Thyroid gland (tissue), 4 donors: ENCODE measurements at regions of chr7 and their contacts with region 1.

Region 1: DNA sequence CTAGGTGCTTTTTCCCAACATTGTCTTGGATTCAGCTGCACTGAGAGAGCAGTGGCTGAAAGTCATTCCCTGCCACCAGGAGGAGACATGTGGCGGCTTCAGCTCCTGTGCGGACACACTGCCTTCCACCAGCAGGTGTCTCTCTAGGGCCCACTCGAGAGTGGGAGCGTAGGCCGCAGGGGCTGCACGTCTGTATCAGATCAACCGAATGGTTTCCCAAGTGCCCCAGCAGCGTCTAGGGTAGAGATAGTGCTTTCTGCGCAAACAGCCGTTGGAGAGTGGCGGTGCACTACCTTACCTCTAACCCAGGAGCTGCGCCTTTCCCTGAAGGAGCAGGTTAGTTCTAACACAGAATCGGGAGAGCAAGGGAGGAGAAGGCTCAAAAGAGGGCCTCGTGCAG is 31.7 kb downstream of the PAPOLB start:
- DNase-seq: peak; percentile 69 to 79
- H3K4me3 ChIP-seq: no peak overlapping the region
- H3K27ac ChIP-seq: no peak overlapping the region
- H3K4me1 ChIP-seq: no peaks in the 10 kb centered on the region
- H3K27me3 ChIP-seq: no peaks in the 10 kb centered on the region
- CTCF ChIP-seq: peak; percentile 18 to 94 (median 79)
- POLR2A ChIP-seq: no peak

Region 2: DNA sequence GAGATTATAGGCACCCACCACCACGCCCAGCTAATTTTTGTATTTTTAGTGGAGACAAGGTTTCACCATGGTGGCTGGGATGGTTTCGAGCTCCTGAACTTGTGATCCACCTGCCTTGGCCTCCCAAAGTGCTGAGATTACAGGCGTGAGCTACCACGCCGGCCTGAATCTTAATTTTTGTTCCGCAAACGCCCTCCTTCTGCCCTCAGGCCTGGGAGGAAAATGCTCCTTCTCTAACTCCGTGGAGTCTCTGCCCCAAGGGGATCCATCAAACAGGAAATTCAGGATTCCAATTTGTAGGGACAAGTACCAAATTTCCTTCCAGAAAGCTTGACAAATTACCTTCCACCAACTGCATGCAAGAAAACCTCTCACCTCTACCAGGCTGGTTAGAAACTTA is 258.7 kb after region 1 on chr7:
- intact Hi-C with region 1: loop called (anchors 5 kb)
- DNase-seq: no peak
- H3K4me3 ChIP-seq: no peak overlapping the region
- H3K27ac ChIP-seq: no peak overlapping the region
- H3K4me1 ChIP-seq: peaks cover 0 to 3% of the 10 kb centered on the region in 2 donors
- H3K27me3 ChIP-seq: no peaks in the 10 kb centered on the region
- CTCF ChIP-seq: no peak
- POLR2A ChIP-seq: no peak